ENCODE measurements at regions of chr13 and their contacts with region 1.

Region 1: DNA sequence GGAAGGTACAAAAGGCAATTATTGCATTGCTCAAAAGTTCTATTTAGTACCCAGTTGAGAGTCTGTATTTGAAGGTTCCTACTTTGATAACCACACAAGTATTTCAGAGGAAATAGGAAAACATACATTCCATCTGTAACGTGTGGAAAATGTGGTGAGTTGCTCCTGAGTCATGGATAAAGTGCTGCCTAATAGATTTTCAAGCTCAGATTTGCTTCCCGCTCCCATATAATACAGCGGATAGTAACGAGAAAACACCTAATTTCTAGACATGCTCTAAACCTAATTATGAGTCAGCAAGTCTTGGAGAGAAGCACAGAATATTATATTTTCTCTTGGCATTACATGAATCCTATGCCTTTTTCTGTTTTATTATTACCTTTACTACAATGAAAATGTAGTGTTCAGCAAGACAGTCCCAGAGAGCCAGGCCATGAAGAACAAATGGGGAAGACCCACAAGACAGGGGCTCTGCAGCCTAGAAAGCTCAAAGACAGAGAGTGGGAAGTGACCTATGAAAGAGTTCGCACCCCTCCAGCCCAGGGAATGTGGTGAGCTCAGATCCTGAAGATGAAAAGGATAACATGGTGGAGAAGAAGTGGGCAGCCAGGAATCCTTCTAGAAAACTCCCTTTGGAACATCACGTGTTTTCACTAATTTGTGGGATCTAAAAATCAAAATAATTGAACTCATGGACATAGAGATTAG is 116.1 kb downstream of the STARD13 start:
- DNase-seq: no peak
- CTCF ChIP-seq: no peak

Region 2: GRCh38 chr13:33110713-33111413 is 58.6 kb before region 1 on chr13:
- CTCF ChIA-PET with region 1: no interaction called
- POLR2A ChIA-PET with region 1: no interaction called
- DNase-seq: peak; percentile 38
- CTCF ChIP-seq: no peak

Region 3: GRCh38 chr13:33158820-33159219 is 10.6 kb before region 1 on chr13:
- CTCF ChIA-PET with region 1: interaction called, 14 read pairs
- POLR2A ChIA-PET with region 1: no interaction called
- DNase-seq: no peak
- CTCF ChIP-seq: no peak

Region 4: DNA sequence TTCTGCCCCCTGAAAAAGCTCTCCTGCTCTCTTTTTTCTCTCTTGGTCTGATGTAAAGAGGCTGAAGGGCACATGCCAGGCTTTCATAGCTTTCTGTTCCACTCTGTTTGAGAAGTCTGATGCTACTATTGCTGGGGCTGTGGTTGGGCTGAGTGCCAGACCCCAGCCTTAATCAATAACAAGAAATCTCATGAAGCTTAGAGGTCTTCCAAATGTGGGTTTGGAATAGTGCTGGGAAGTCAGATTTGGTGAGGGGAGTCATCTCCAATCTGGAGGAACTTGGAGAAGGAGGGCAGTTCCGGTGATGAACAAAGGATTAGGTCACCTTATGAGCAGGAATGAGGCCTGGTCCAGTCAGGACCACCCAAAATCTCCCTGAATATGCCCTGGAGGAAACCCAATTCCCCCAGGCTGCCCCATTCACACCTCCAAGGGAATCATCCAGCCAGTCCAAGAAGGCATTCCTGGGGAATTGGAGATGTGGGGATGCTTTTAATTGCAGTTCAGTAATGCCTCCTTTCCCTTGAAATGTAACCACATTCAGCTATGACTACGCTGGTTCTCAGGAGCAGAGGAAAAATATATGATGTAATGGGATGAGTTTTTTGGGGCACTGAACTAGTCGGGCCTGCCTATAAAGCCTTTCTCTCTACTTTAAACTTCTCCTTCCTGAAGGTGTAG is 14.1 kb after region 1 on chr13:
- CTCF ChIA-PET with region 1: interaction called, 37 read pairs
- POLR2A ChIA-PET with region 1: no interaction called
- DNase-seq: no peak
- CTCF ChIP-seq: no peak

Region 5: DNA sequence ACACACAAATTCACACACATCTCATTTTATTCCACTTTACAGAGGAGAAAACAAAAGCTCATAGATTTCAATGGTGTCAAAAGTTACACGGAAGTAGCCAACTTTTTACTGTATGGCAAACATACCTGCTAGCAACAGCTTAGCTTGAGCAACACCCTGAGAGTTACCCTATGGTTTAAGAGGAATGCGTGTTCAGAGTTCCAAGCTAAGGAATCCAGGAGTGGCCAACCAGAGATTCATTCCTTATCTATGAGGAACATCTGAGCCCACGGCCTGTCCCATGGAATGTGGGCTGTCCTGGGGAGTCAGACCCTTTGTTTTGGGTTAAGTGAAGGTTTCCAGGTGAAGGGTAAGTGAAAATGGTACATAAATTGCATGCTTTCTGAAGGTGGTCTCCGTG is 48.6 kb after region 1 on chr13:
- CTCF ChIA-PET with region 1: no interaction called
- POLR2A ChIA-PET with region 1: no interaction called
- DNase-seq: no peak
- CTCF ChIP-seq: no peak

Region 6: DNA sequence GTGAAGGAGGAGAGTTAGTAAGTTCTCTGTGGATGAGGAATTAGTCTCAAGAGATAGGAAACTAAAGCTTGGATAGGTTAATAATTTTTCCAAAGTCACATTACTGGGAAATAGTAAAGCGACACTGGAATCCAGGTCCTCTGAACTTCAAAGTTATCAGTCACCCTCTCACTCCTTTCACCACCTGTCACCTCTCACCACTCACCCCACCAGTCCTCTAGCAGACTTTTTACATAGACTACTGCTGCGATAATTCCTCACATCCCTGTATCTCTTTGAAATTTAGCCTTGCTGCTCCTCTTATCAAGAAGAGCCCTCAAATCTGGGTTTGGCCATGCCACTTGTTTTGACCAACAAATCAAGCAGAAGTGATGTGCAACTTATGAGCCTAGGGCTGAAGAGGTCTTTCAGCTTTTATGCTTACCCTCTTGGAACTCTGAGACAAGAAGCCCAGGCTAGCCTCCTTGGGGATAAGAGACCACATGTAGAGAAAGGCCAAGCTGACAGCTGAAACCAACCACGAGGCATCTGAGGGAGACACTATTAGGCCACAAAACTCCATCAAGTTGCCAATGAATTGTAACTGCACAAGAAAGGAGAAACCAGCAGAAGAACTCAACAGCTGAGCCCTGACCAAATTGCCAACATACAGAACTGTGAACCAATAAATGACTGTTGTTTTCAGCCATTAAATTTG is 74.9 kb after region 1 on chr13:
- CTCF ChIA-PET with region 1: no interaction called
- POLR2A ChIA-PET with region 1: no interaction called
- DNase-seq: no peak
- CTCF ChIP-seq: no peak

Region 7: DNA sequence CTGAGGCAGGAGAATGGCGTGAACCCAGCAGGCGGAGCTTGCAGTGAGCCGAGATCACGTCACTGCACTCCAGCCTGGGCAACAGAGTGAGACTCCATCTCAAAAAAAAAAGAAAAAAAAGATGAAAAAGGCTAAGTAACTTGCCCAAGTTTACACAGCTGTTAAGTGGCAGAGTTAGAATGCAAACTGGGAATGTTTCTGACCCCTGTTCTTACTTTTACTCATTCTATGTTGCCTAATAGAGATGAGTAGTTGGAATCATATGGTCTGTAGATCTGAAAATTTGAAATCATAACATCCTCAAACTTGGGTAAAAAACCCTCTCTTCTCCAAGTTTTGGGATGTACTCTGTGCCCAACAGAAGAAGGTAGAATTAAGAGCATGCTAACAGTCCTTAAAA is 412.7 kb after region 1 on chr13:
- CTCF ChIA-PET with region 1: no interaction called
- POLR2A ChIA-PET with region 1: no interaction called
- DNase-seq: no peak
- CTCF ChIP-seq: no peak

Measured in GM10248 (cell line).